ENCODE measurements at regions of chr2 and their contacts with region 1.

Region 1: GRCh38 chr2:158006961-158007719 is 94.5 kb upstream of the UPP2 start:
- DNase-seq: peak in 3 of 9 donors; percentile 14 to 20 (median 18)
- ATAC-seq: peak; percentile 55
- H3K4me3 ChIP-seq: no peak overlapping the region
- H3K4me3 Mint-ChIP-seq: no peak overlapping the region
- H3K27ac ChIP-seq: no peak overlapping the region
- H3K27ac Mint-ChIP-seq: peak overlapping the region in 1 of 9 donors; percentile 1
- H3K4me1 ChIP-seq: no peaks in the 10 kb centered on the region
- H3K4me1 Mint-ChIP-seq: peaks cover 5 to 26% (median 8%) of the 10 kb centered on the region in 7 donors
- H3K27me3 ChIP-seq: no peaks in the 10 kb centered on the region
- H3K27me3 Mint-ChIP-seq: peaks cover 0 to 9% (median 2%) of the 10 kb centered on the region in 5 donors

Region 2: GRCh38 chr2:157497638-157498314 is 509.4 kb before region 1 on chr2:
- CTCF ChIA-PET with region 1: interaction called, 3 read pairs
- POLR2A ChIA-PET with region 1: interaction called, 4 read pairs
- intact Hi-C with region 1: loop called (anchors 1 kb)
- DNase-seq: peak in 7 of 9 donors; percentile 13 to 61 (median 49)
- ATAC-seq: peak; percentile 94
- H3K4me3 ChIP-seq: no peak overlapping the region
- H3K4me3 Mint-ChIP-seq: no peak overlapping the region
- H3K27ac ChIP-seq: no peak overlapping the region
- H3K27ac Mint-ChIP-seq: peak overlapping the region in 1 of 9 donors; percentile 29
- H3K4me1 ChIP-seq: peaks cover 0 to 8% of the 10 kb centered on the region in 2 donors
- H3K4me1 Mint-ChIP-seq: peaks cover 8 to 40% (median 37%) of the 10 kb centered on the region in 7 donors
- H3K27me3 ChIP-seq: no peaks in the 10 kb centered on the region
- H3K27me3 Mint-ChIP-seq: no peaks in the 10 kb centered on the region

Region 3: GRCh38 chr2:157523270-157524247 is 483.6 kb before region 1 on chr2:
- CTCF ChIA-PET with region 1: no interaction called
- POLR2A ChIA-PET with region 1: no interaction called
- intact Hi-C with region 1: no loop called
- DNase-seq: no peak
- ATAC-seq: no peak
- H3K4me3 ChIP-seq: no peak overlapping the region
- H3K4me3 Mint-ChIP-seq: no peak overlapping the region
- H3K27ac ChIP-seq: no peak overlapping the region
- H3K27ac Mint-ChIP-seq: peak overlapping the region in 1 of 9 donors; percentile 47
- H3K4me1 ChIP-seq: no peaks in the 10 kb centered on the region
- H3K4me1 Mint-ChIP-seq: peaks cover 0 to 4% (median 0%) of the 10 kb centered on the region in 7 donors
- H3K27me3 ChIP-seq: no peaks in the 10 kb centered on the region
- H3K27me3 Mint-ChIP-seq: peaks cover 0 to 23% (median 0%) of the 10 kb centered on the region in 5 donors

Region 4: GRCh38 chr2:157596992-157597681 is 410.0 kb before region 1 on chr2:
- CTCF ChIA-PET with region 1: interaction called, 3 read pairs
- POLR2A ChIA-PET with region 1: no interaction called
- intact Hi-C with region 1: loop called (anchors 10 kb)
- DNase-seq: peak; percentile 32 to 60 (median 53)
- ATAC-seq: peak; percentile 80
- H3K4me3 ChIP-seq: no peak overlapping the region
- H3K4me3 Mint-ChIP-seq: peak overlapping the region; percentile 61 to 81 (median 72)
- H3K27ac ChIP-seq: no peak overlapping the region
- H3K27ac Mint-ChIP-seq: peak overlapping the region in 2 of 9 donors; percentile 21 to 65
- H3K4me1 ChIP-seq: no peaks in the 10 kb centered on the region
- H3K4me1 Mint-ChIP-seq: peaks cover 9 to 30% (median 20%) of the 10 kb centered on the region in 7 donors
- H3K27me3 ChIP-seq: no peaks in the 10 kb centered on the region
- H3K27me3 Mint-ChIP-seq: peaks cover 0 to 37% (median 0%) of the 10 kb centered on the region in 5 donors

Region 5: DNA sequence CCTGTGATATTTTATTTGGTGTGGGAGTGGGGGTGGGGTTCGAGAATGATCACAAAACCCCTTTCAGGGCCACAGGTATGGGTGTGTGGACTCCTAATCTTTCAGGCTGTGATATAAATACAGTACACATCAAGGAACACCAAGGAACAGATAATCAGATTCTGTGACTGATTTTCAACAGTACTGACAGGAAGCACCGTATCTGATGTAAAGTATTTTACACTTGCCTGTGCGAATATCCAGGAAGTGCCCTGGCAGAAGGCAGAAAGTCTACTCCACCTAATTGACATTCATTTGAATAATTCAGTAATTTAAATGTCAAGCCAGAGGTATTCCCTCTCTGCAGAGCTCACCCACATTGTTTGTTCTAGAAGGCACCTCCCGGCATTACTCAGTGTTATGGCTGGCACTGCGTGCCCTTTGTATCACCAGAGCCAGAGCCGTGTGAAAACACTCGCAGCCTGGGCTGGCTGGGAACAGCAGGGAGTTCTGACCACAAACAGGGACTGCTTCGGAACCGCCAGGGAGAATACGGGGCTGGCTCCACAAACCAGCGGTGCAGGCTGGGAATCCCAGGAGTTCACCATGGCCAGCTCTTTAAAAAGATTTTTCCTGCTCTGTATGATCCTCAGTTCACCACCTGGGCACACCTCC is 222.8 kb before region 1 on chr2:
- CTCF ChIA-PET with region 1: interaction called, 6 read pairs
- POLR2A ChIA-PET with region 1: no interaction called
- intact Hi-C with region 1: loop called in 1 of 2 experiments (anchors 1 kb)
- DNase-seq: peak in 6 of 9 donors; percentile 3 to 29 (median 14)
- ATAC-seq: peak; percentile 55
- H3K4me3 ChIP-seq: no peak overlapping the region
- H3K4me3 Mint-ChIP-seq: peak overlapping the region in 9 of 10 donors; percentile 22 to 59 (median 38)
- H3K27ac ChIP-seq: no peak overlapping the region
- H3K27ac Mint-ChIP-seq: peak overlapping the region; percentile 25 to 90 (median 73)
- H3K4me1 ChIP-seq: peaks cover 0 to 12% of the 10 kb centered on the region in 2 donors
- H3K4me1 Mint-ChIP-seq: peaks cover 13 to 51% (median 37%) of the 10 kb centered on the region in 7 donors
- H3K27me3 ChIP-seq: no peaks in the 10 kb centered on the region
- H3K27me3 Mint-ChIP-seq: no peaks in the 10 kb centered on the region

Region 6: GRCh38 chr2:157986761-157987160 is 20.4 kb before region 1 on chr2:
- CTCF ChIA-PET with region 1: no interaction called
- POLR2A ChIA-PET with region 1: no interaction called
- intact Hi-C with region 1: no loop called
- DNase-seq: no peak
- ATAC-seq: no peak
- H3K4me3 ChIP-seq: no peak overlapping the region
- H3K4me3 Mint-ChIP-seq: no peak overlapping the region
- H3K27ac ChIP-seq: no peak overlapping the region
- H3K27ac Mint-ChIP-seq: no peak overlapping the region
- H3K4me1 ChIP-seq: no peaks in the 10 kb centered on the region
- H3K4me1 Mint-ChIP-seq: no peaks in the 10 kb centered on the region
- H3K27me3 ChIP-seq: no peaks in the 10 kb centered on the region
- H3K27me3 Mint-ChIP-seq: peaks cover 0 to 18% (median 6%) of the 10 kb centered on the region in 5 donors

Region 7: GRCh38 chr2:158024288-158024898 is 17.3 kb after region 1 on chr2:
- CTCF ChIA-PET with region 1: interaction called, 4 read pairs
- POLR2A ChIA-PET with region 1: no interaction called
- intact Hi-C with region 1: loop called in 1 of 2 experiments (anchors 1 kb)
- DNase-seq: peak in 8 of 9 donors; percentile 14 to 60 (median 41)
- ATAC-seq: peak; percentile 70
- H3K4me3 ChIP-seq: no peak overlapping the region
- H3K4me3 Mint-ChIP-seq: no peak overlapping the region
- H3K27ac ChIP-seq: no peak overlapping the region
- H3K27ac Mint-ChIP-seq: no peak overlapping the region
- H3K4me1 ChIP-seq: no peaks in the 10 kb centered on the region
- H3K4me1 Mint-ChIP-seq: peaks cover 4 to 15% (median 9%) of the 10 kb centered on the region in 7 donors
- H3K27me3 ChIP-seq: no peaks in the 10 kb centered on the region
- H3K27me3 Mint-ChIP-seq: peaks cover 0 to 10% (median 0%) of the 10 kb centered on the region in 5 donors

Region 8: DNA sequence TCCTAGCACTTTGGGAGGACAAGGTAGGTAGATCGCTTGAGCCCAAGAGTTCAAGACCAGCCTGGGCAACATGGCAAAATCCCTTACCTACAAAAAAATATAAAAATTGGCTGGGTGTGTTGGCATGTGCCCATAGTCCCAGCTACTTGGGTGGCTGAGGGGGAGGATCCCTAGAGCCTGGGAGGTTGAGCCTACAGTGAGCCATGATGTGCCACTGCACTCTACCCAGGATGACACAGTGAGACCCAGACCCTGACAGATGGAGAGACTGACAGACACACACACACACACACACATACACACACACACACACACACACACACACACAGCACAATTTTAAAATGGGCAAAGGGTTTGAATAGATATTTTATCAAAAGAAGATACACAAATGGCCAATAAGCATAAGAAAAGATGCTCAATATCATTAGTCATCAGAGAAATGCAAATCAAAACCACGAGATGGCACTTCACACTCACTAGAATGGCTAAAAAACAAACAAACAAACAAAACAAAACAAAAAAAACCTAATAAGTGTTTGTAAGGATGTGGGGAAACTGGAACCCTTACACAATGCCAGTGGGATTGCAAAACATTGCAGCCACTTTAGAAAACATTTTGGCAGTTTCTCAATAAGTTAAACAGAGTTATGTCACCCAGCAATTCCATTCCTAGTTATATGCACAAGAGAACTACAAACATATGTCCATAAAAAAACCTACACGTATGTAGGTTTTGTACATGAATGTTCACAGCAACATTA is 1566.9 kb after region 1 on chr2:
- CTCF ChIA-PET with region 1: no interaction called
- POLR2A ChIA-PET with region 1: no interaction called
- intact Hi-C with region 1: no loop called
- DNase-seq: no peak
- ATAC-seq: peak; percentile 24
- H3K4me3 ChIP-seq: no peak overlapping the region
- H3K4me3 Mint-ChIP-seq: no peak overlapping the region
- H3K27ac ChIP-seq: no peak overlapping the region
- H3K27ac Mint-ChIP-seq: no peak overlapping the region
- H3K4me1 ChIP-seq: no peaks in the 10 kb centered on the region
- H3K4me1 Mint-ChIP-seq: peaks cover 0 to 2% (median 0%) of the 10 kb centered on the region in 7 donors
- H3K27me3 ChIP-seq: no peaks in the 10 kb centered on the region
- H3K27me3 Mint-ChIP-seq: peaks cover 0 to 2% (median 0%) of the 10 kb centered on the region in 5 donors